SK-N-SH (cell line): ENCODE measurements at regions of chr3 and their contacts with region 1.

Region 1: GRCh38 chr3:128845778-128846485 is 33.5 kb upstream of the ACAD9 start:
- DNase-seq: peak; percentile 94
- H3K4me3 ChIP-seq: peak overlapping the region; percentile 52 to 58
- H3K27ac ChIP-seq: peak overlapping the region in 1 of 2 experiments; percentile 53; a peak in 2 of 4 replicates
- H3K4me1 ChIP-seq: peaks cover 5 to 30% of the 10 kb centered on the region in 2 experiments; a peak in 1 of 4 replicates
- H3K27me3 ChIP-seq: no peaks in the 10 kb centered on the region
- CTCF ChIP-seq: peak; percentile 67
- EP300 ChIP-seq: no peak
- RAD21 ChIP-seq: peak; percentile 61

Region 2: DNA sequence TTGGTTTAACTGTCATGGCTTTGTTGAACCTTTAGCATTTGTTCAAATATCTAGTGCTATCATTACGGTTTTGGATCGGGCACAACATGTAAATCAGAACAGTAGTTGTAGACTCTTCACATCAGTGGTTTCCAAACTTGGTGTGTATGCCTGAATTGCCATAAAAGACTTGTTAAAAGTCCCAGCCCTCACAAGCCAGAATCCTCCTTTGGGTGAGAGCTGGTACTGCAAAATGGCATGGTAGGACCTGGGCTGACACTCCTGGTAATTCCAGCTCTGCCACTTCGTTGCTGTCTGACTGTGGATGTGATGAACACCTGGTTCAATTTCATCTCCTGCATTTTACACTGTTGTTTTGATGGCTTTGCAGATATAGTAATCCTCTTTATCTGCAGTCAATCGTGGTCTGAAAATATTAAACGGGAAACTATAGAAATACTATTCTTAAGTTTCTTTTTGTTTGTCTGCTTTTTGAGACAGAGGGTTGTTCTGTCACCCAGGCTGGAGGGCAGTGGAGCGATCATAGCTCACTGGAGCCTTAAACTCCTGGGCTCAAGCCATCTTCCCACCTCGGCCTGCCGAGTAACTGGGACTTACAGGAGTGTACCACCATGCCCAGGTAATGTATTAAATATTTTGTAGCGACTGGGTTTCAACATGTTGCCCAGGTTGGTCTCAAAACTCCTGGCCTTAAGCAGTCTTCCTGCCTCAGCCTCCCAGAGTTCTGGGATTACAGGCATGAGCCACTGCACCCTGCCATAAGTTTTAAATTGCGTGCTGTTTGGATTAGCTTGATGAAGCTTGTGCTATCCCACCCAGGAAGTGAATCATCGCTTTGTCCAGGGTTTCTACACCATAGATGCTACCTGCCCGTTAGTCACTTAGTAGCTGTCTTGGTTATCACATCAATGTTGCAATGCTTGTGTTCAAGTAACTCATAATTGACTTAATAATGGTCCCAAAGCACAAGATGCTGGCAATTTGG is 58.4 kb before region 1 on chr3:
- CTCF ChIA-PET with region 1: interaction called, 13 read pairs
- POLR2A ChIA-PET with region 1: no interaction called
- DNase-seq: peak; percentile 47
- H3K4me3 ChIP-seq: no peak overlapping the region
- H3K27ac ChIP-seq: no peak overlapping the region
- H3K4me1 ChIP-seq: peaks cover 7 to 19% of the 10 kb centered on the region in 2 experiments; a peak in 2 of 4 replicates
- H3K27me3 ChIP-seq: no peaks in the 10 kb centered on the region
- CTCF ChIP-seq: peak; percentile 41
- EP300 ChIP-seq: no peak
- RAD21 ChIP-seq: no peak

Region 3: DNA sequence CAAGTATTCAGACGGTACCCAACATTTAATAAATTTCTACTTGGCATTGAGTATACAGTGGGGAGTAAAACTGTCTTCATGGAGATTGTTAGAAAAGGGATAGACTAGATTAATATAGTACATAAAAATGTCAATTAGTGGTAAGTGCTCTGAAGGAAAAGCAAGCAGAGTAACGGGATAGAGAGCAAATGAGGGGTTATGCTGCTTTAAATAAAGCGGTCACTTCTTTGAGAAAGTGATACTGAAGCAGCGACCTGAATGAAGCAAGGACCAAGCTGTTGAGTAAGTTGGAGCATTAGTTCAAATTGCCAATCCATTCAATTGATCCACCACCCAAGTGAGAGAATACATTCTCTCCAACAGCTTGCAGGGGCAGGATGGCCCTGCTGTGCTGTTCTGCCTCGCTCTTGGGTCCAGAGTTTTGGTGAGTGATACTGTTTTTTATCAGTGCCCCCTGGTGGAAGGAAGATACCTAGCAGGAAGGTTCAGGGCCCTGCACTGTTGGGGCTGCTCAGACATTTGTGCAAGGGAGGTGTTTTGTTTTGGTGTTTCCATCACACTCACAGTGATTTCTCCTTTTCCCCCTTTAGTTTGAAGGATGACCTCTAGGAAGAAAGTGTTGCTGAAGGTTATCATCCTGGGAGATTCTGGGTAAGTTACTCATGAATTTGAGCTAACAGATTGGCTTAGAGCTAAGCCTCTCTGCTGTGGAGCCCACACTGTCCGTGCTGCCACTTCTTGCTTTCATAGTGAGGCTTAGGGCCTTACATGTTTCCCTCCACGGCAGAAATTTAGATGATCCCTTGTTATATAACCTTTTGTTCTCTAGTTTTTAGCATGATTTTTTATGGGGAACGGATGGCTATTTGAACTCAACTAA is 50.9 kb before region 1 on chr3:
- CTCF ChIA-PET with region 1: interaction called, 20 read pairs
- POLR2A ChIA-PET with region 1: no interaction called
- DNase-seq: peak; percentile 81
- H3K4me3 ChIP-seq: no peak overlapping the region; a peak in 1 of 4 replicates
- H3K27ac ChIP-seq: peak overlapping the region; percentile 20 to 69; a peak in 3 of 4 replicates
- H3K4me1 ChIP-seq: peaks cover 5 to 13% of the 10 kb centered on the region in 2 experiments; a peak in 2 of 4 replicates
- H3K27me3 ChIP-seq: no peaks in the 10 kb centered on the region
- CTCF ChIP-seq: peak; percentile 82
- EP300 ChIP-seq: no peak
- RAD21 ChIP-seq: peak; percentile 78

Region 4: DNA sequence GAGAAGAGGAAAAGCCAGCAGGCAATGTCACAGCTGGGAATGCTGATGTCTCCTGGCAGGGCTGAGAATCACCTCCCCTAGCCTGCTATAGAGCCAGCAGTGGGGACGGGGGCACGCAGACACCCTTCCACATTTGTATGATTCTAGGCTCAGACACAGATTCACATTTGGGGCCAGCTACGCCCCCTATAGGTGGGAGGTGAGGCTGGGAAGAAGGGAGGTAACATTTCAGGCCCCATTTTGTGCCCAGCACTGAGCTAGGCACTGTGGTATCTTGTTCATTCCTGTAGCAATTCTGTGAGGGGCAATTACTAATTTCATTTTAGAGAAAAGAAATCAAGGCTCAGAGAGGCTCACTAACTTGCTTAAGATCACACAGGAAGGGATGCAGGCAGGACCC is 17.6 kb after region 1 on chr3:
- CTCF ChIA-PET with region 1: interaction called, 15 read pairs
- POLR2A ChIA-PET with region 1: no interaction called
- DNase-seq: no peak
- H3K4me3 ChIP-seq: no peak overlapping the region
- H3K27ac ChIP-seq: no peak overlapping the region
- H3K4me1 ChIP-seq: peaks cover 0 to 16% of the 10 kb centered on the region in 2 experiments; a peak in 1 of 4 replicates
- H3K27me3 ChIP-seq: no peaks in the 10 kb centered on the region
- CTCF ChIP-seq: peak; percentile 39
- EP300 ChIP-seq: no peak
- RAD21 ChIP-seq: no peak

Region 5: GRCh38 chr3:128870347-128870746 is 24.4 kb after region 1 on chr3:
- CTCF ChIA-PET with region 1: interaction called, 13 read pairs
- POLR2A ChIA-PET with region 1: no interaction called
- DNase-seq: no peak
- H3K4me3 ChIP-seq: no peak overlapping the region
- H3K27ac ChIP-seq: no peak overlapping the region
- H3K4me1 ChIP-seq: peaks cover 0 to 5% of the 10 kb centered on the region in 2 experiments; a peak in 1 of 4 replicates
- H3K27me3 ChIP-seq: no peaks in the 10 kb centered on the region
- CTCF ChIP-seq: no peak
- EP300 ChIP-seq: no peak
- RAD21 ChIP-seq: no peak

Region 6: GRCh38 chr3:128879125-128879969 is 33.4 kb after region 1 on chr3 and contains the start of gene ACAD9:
- CTCF ChIA-PET with region 1: interaction called, 15 read pairs
- POLR2A ChIA-PET with region 1: no interaction called
- DNase-seq: peak; percentile 99
- H3K4me3 ChIP-seq: peak within 1 kb of the TSS; percentile 81 to 95
- H3K27ac ChIP-seq: peak within 1 kb of the TSS; percentile 92 to 93
- H3K4me1 ChIP-seq: peaks cover 0 to 24% of the 10 kb centered on the region in 2 experiments; a peak in 2 of 4 replicates
- H3K27me3 ChIP-seq: no peaks in the 10 kb centered on the region
- CTCF ChIP-seq: no peak
- EP300 ChIP-seq: peak in 1 of 2 experiments; percentile 35; a peak in 1 of 4 replicates
- RAD21 ChIP-seq: no peak; the same call in 1 of the 2 replicates
- polyA plus RNA-seq, gene ACAD9: 38.2 and 41.9 TPM in 2 replicates